CD8-positive, alpha-beta T cell (primary cell): ENCODE measurements at regions of chr11 and their contacts with region 1.

Region 1: DNA sequence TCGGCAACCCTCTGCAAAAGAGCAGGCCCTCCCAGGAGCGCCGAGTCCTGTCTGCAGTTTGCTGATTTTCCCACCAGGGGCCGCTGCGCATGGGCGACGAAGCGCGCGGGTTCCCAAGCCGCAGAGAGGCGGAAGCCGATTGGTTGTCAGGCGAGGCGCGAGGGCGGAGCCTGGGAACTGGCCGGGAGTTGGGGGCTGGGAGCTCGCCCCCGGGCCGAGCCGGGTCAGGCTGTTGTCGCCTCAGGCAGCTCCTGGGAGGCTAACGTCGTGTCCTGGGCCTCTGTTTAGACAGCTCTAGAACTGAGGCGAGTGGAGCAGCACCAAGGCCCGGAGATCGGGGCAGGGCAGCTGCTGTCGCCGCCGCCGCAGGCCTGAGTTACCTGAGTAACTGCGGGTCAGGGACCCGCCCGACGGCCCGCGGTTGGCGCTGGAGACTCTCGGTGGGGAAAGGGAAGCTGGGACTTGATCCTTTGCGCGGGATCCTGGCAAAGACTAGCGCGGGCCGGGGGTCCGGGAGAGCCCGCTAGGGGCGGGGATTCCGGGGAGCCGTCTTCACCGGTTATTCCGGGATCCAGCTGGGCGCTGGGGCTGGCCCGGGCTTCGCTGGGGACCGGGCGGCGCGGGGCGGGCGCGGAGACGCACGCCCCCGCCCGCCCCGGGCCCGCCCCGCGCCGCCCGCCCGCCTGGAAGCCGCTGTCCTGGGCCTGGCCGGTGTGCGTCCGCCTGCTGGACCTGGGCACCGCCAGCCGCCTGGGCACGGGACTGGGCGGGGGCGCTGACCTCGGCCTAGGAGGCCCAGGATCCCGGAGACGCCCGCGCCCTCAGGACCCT is at the start of gene STIM1:
- DNase-seq: peak; percentile 95 to 99 (median 97)
- ATAC-seq: peak; percentile 73
- H3K4me3 ChIP-seq: peak within 1 kb of the TSS; percentile 79 to 98
- H3K4me3 Mint-ChIP-seq: peak within 1 kb of the TSS; percentile 93
- H3K27ac ChIP-seq: peak within 1 kb of the TSS; percentile 83 to 95
- H3K27ac Mint-ChIP-seq: peak within 1 kb of the TSS; percentile 99
- H3K4me1 ChIP-seq: peaks cover 61% of the 10 kb centered on the region
- H3K4me1 Mint-ChIP-seq: peaks cover 63% of the 10 kb centered on the region
- H3K27me3 ChIP-seq: no peaks in the 10 kb centered on the region
- H3K27me3 Mint-ChIP-seq: no peaks in the 10 kb centered on the region
- CTCF ChIP-seq: peak; percentile 87
- total RNA-seq, gene STIM1: 72.5 to 84.3 TPM

Region 2: DNA sequence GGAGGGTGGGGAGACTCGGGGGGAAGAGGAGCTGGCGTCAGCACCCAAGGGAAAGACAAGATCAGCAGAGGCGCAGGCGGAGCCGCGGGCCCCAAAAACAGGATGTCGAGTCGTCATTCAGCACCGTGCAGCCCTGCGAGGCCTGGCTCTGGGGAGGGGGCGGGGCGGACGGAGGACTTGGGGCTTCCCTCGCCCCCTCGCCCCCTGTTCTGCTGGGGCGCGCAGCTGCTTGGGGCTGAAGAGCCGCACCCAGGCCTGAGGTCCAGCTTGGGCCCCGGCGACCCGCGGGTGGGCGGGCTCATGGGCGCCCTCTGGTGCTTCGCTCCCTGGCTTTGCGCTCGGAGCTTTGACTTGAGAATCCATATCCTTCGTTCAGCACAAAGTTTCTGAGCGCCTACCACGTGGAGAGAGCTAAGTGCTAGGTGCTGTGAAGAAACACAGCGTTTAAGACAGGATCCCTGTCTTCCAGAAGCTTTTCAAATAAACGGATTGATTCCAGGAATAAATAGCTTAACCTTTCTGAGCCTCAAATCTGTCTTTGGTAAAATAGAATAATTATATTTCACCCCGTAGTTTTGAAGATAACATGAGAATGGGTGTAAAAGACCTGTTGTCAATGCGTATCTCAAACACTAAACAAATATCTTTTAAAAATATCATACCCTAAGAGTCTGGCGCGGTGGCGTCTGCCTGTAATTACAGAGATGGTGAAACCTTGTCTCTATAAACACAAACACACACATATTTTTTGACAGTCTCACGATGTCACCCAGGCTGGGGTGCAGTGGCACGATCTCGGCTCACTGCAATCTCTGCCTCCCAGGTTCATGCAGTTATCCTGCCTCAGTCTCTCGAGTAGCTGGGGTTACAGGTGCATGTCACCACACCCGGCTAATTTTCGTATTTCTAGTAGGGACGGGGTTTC is 13.5 kb before region 1 on chr11:
- CTCF ChIA-PET with region 1: interaction called, 265 read pairs
- POLR2A ChIA-PET with region 1: interaction called, 252 read pairs
- intact Hi-C with region 1: loop called (anchors 1 kb)
- DNase-seq: peak; percentile 80 to 98 (median 94)
- ATAC-seq: peak; percentile 27
- H3K4me3 ChIP-seq: peak overlapping the region; percentile 70 to 95
- H3K4me3 Mint-ChIP-seq: peak overlapping the region; percentile 85
- H3K27ac ChIP-seq: peak overlapping the region; percentile 92 to 95
- H3K27ac Mint-ChIP-seq: peak overlapping the region; percentile 97
- H3K4me1 ChIP-seq: peaks cover 34% of the 10 kb centered on the region
- H3K4me1 Mint-ChIP-seq: peaks cover 46% of the 10 kb centered on the region
- H3K27me3 ChIP-seq: no peaks in the 10 kb centered on the region
- H3K27me3 Mint-ChIP-seq: no peaks in the 10 kb centered on the region
- CTCF ChIP-seq: peak; percentile 66

Region 3: DNA sequence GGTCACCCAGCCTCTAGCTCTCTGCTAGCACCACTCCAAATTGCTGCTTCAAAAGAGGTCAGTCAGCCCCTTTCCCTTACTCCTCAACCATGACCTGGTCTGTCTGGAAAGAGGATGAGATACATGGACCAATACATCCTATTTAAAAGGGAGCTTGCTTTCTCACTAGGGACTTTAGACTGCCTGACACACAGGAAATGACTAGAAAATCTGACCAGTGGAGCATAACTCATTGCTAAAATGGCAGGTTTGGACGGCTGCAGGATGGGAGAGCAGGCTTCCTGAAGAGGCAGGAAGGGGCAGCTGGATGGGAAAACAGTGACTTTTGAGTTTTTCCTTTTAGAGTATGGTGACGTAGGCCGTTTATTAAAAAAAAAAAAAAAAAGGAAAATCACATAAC is 25.5 kb after region 1 on chr11:
- CTCF ChIA-PET with region 1: interaction called, 33 read pairs
- POLR2A ChIA-PET with region 1: interaction called, 8 read pairs
- intact Hi-C with region 1: loop called (anchors 2 kb)
- DNase-seq: no peak
- ATAC-seq: no peak
- H3K4me3 ChIP-seq: no peak overlapping the region
- H3K4me3 Mint-ChIP-seq: no peak overlapping the region
- H3K27ac ChIP-seq: peak overlapping the region in 1 of 2 experiments; percentile 66
- H3K27ac Mint-ChIP-seq: peak overlapping the region; percentile 82
- H3K4me1 ChIP-seq: peaks cover 60% of the 10 kb centered on the region
- H3K4me1 Mint-ChIP-seq: peaks cover 80% of the 10 kb centered on the region
- H3K27me3 ChIP-seq: no peaks in the 10 kb centered on the region
- H3K27me3 Mint-ChIP-seq: no peaks in the 10 kb centered on the region
- CTCF ChIP-seq: no peak

Region 4: GRCh38 chr11:3914805-3915204 is 59.6 kb after region 1 on chr11:
- CTCF ChIA-PET with region 1: interaction called, 17 read pairs
- POLR2A ChIA-PET with region 1: no interaction called
- intact Hi-C with region 1: no loop called
- DNase-seq: peak in 2 of 9 experiments; percentile 63 to 75
- ATAC-seq: peak; percentile 61
- H3K4me3 ChIP-seq: no peak overlapping the region
- H3K4me3 Mint-ChIP-seq: no peak overlapping the region
- H3K27ac ChIP-seq: no peak overlapping the region
- H3K27ac Mint-ChIP-seq: peak overlapping the region; percentile 46
- H3K4me1 ChIP-seq: peaks cover 57% of the 10 kb centered on the region
- H3K4me1 Mint-ChIP-seq: peaks cover 73% of the 10 kb centered on the region
- H3K27me3 ChIP-seq: no peaks in the 10 kb centered on the region
- H3K27me3 Mint-ChIP-seq: no peaks in the 10 kb centered on the region
- CTCF ChIP-seq: no peak

Region 5: DNA sequence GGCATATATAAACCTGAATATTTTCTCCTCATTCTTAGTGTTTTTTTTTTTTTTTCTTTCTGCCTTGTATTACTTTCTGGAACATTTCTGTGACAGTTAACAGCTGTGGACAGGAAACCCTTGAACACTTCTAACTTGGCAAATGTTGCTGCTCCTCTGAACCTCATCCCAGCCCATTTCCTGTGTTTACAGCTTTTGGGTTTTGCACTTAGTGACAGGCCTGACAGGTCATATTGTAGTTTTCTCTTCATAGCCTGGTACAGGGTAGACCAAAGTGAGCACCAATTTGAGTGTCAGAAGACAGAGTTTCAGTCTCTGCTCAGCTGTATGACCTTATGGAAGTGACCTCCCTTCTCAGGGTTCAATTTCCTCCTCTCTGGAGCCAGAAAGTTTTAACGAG is 91.9 kb after region 1 on chr11:
- CTCF ChIA-PET with region 1: interaction called, 36 read pairs
- POLR2A ChIA-PET with region 1: interaction called, 32 read pairs
- intact Hi-C with region 1: loop called in 1 of 2 experiments (anchors 2 kb)
- DNase-seq: peak; percentile 23 to 90 (median 62)
- ATAC-seq: peak; percentile 72
- H3K4me3 ChIP-seq: peak overlapping the region; percentile 32 to 35
- H3K4me3 Mint-ChIP-seq: peak overlapping the region; percentile 75
- H3K27ac ChIP-seq: peak overlapping the region; percentile 68 to 86
- H3K27ac Mint-ChIP-seq: peak overlapping the region; percentile 95
- H3K4me1 ChIP-seq: peaks cover 95% of the 10 kb centered on the region
- H3K4me1 Mint-ChIP-seq: peaks cover 95% of the 10 kb centered on the region
- H3K27me3 ChIP-seq: no peaks in the 10 kb centered on the region
- H3K27me3 Mint-ChIP-seq: no peaks in the 10 kb centered on the region
- CTCF ChIP-seq: no peak

Region 6: GRCh38 chr11:3984896-3985295 is 129.7 kb after region 1 on chr11:
- CTCF ChIA-PET with region 1: interaction called, 22 read pairs
- POLR2A ChIA-PET with region 1: interaction called, 15 read pairs
- intact Hi-C with region 1: loop called in 1 of 2 experiments (anchors 1 kb)
- DNase-seq: peak in 7 of 9 experiments; percentile 12 to 72 (median 54)
- ATAC-seq: peak; percentile 77
- H3K4me3 ChIP-seq: no peak overlapping the region
- H3K4me3 Mint-ChIP-seq: no peak overlapping the region
- H3K27ac ChIP-seq: no peak overlapping the region
- H3K27ac Mint-ChIP-seq: peak overlapping the region; percentile 92
- H3K4me1 ChIP-seq: peaks cover 78% of the 10 kb centered on the region
- H3K4me1 Mint-ChIP-seq: peaks cover 91% of the 10 kb centered on the region
- H3K27me3 ChIP-seq: no peaks in the 10 kb centered on the region
- H3K27me3 Mint-ChIP-seq: no peaks in the 10 kb centered on the region
- CTCF ChIP-seq: peak; percentile 21

Region 7: DNA sequence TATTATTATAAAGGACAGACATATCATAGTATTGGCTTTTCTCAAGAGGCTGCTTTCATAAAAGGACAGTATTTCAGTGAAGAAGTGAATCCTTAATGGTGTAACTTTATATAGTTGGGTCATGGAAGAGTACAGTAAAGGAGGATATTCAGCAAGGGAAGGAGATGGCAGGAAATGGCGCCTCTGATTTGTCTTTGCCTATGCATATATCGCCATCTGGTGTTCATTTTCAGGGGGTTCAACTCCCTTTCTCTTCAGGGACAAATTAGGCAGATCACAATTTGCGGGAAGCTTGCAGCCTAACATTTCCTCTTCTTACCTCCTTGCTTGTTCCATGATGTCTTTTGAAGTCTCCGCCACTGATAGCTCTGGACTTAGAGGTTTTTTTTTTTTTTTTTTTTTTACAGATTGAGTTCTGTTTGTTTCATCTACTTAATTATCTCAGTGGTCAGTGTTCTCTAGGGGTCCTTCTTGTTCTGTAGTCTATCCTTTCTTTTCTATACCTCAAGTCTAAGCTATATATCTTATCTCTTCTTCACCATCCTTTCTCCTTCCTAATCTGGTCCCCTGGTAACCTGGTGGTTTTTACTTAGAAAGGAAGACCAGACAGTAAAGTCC is 217.6 kb after region 1 on chr11:
- CTCF ChIA-PET with region 1: interaction called, 548 read pairs
- POLR2A ChIA-PET with region 1: interaction called, 27 read pairs
- intact Hi-C with region 1: loop called in 1 of 2 experiments (anchors 1 kb)
- DNase-seq: peak in 7 of 9 experiments; percentile 29 to 87 (median 46)
- ATAC-seq: peak; percentile 83
- H3K4me3 ChIP-seq: no peak overlapping the region
- H3K4me3 Mint-ChIP-seq: no peak overlapping the region
- H3K27ac ChIP-seq: peak overlapping the region in 1 of 2 experiments; percentile 49
- H3K27ac Mint-ChIP-seq: peak overlapping the region; percentile 87
- H3K4me1 ChIP-seq: peaks cover 37% of the 10 kb centered on the region
- H3K4me1 Mint-ChIP-seq: peaks cover 53% of the 10 kb centered on the region
- H3K27me3 ChIP-seq: no peaks in the 10 kb centered on the region
- H3K27me3 Mint-ChIP-seq: no peaks in the 10 kb centered on the region
- CTCF ChIP-seq: peak; percentile 87